Activated naive CD4-positive, alpha-beta T cell treated with anti-CD3 and anti-CD28 coated beads for 36 hours (primary cell): ENCODE measurements at regions of chr12 and their contacts with region 1.

Region 1: DNA sequence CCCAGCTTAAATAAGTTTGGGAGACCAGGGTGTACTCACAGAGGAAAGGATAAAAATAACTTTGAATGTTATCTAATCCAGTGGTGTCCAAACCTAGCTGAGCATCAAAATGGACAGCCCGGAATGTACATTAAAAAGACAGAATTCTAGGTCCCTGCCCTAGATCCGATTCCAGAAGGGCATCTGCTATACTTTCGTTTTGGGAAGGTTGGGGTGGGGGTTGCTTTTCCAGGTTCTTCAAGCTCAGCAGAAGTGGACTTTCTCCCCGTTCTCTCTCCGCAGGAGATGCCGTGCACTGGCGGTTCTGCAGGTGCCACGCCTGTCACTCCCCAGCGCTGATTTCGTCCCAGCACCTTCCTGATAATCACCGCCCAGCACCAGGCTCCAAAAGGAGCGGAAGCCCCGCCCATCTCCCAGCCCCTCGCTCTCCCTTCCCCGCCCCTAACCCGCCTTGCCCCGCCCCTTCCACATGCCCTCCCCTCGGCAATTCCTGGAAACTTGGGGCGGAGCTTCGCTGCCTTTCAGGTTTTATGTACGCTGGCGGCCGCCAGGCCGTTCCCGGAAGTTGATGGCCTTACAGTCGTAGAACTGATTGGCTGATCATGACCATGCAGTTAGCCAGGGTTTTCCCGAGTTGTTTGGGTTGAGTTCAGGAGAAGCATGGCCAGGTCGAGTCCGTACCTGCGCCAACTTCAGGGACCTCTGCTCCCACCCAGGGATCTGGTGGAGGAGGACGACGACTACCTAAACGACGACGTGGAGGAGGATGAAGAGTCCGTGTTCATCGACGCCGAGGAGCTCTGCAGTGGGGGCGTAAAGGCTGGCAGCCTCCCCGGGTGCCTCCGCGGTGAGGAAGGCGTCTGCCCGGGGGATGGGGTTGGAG is at the start of gene HELB:
- DNase-seq: peak; percentile 99
- H3K4me3 Mint-ChIP-seq: peak within 1 kb of the TSS; percentile 100
- H3K27ac Mint-ChIP-seq: peak within 1 kb of the TSS; percentile 100
- H3K4me1 Mint-ChIP-seq: peaks cover 36% of the 10 kb centered on the region
- H3K27me3 Mint-ChIP-seq: no peaks in the 10 kb centered on the region
- total RNA-seq, gene HELB: 23.0 to 23.7 TPM

Region 2: GRCh38 chr12:64610149-64610678 is 1692.0 kb before region 1 on chr12 and contains the start of gene RASSF3:
- CTCF ChIA-PET with region 1: no interaction called
- intact Hi-C with region 1: loop called (anchors 2 kb)
- DNase-seq: peak; percentile 83
- H3K4me3 Mint-ChIP-seq: peak within 1 kb of the TSS; percentile 95
- H3K27ac Mint-ChIP-seq: peak within 1 kb of the TSS; percentile 96
- H3K4me1 Mint-ChIP-seq: peaks cover 43% of the 10 kb centered on the region
- H3K27me3 Mint-ChIP-seq: no peaks in the 10 kb centered on the region
- total RNA-seq, gene RASSF3: 39.4 to 43.8 TPM

Region 3: GRCh38 chr12:66169221-66170170 is 132.7 kb before region 1 on chr12 and contains the start of gene TMBIM4:
- CTCF ChIA-PET with region 1: interaction called, 8 read pairs
- intact Hi-C with region 1: loop called (anchors 1 kb)
- DNase-seq: peak; percentile 93
- H3K4me3 Mint-ChIP-seq: peak within 1 kb of the TSS; percentile 98
- H3K27ac Mint-ChIP-seq: peak within 1 kb of the TSS; percentile 100
- H3K4me1 Mint-ChIP-seq: peaks cover 42% of the 10 kb centered on the region
- H3K27me3 Mint-ChIP-seq: no peaks in the 10 kb centered on the region
- total RNA-seq, gene TMBIM4: 51.2 to 51.3 TPM

Region 4: GRCh38 chr12:66288121-66288520 is 14.1 kb before region 1 on chr12:
- CTCF ChIA-PET with region 1: interaction called, 5 read pairs
- intact Hi-C with region 1: loop called (anchors 1 kb)
- DNase-seq: peak; percentile 67
- H3K4me3 Mint-ChIP-seq: peak overlapping the region; percentile 40
- H3K27ac Mint-ChIP-seq: peak overlapping the region; percentile 74
- H3K4me1 Mint-ChIP-seq: peaks cover 77% of the 10 kb centered on the region
- H3K27me3 Mint-ChIP-seq: no peaks in the 10 kb centered on the region

Region 5: GRCh38 chr12:66428261-66428660 is 126.1 kb after region 1 on chr12:
- CTCF ChIA-PET with region 1: no interaction called
- intact Hi-C with region 1: no loop called
- DNase-seq: no peak
- H3K4me3 Mint-ChIP-seq: no peak overlapping the region
- H3K27ac Mint-ChIP-seq: no peak overlapping the region
- H3K4me1 Mint-ChIP-seq: no peaks in the 10 kb centered on the region
- H3K27me3 Mint-ChIP-seq: peaks cover 3% of the 10 kb centered on the region

Region 6: GRCh38 chr12:66491853-66492252 is 189.7 kb after region 1 on chr12:
- CTCF ChIA-PET with region 1: no interaction called
- intact Hi-C with region 1: no loop called
- DNase-seq: no peak
- H3K4me3 Mint-ChIP-seq: no peak overlapping the region
- H3K27ac Mint-ChIP-seq: no peak overlapping the region
- H3K4me1 Mint-ChIP-seq: no peaks in the 10 kb centered on the region
- H3K27me3 Mint-ChIP-seq: peaks cover 6% of the 10 kb centered on the region

Region 7: GRCh38 chr12:67268896-67269631 is 966.9 kb after region 1 on chr12 and contains the start of gene CAND1:
- CTCF ChIA-PET with region 1: no interaction called
- intact Hi-C with region 1: loop called (anchors 1 kb)
- DNase-seq: peak; percentile 97
- H3K4me3 Mint-ChIP-seq: peak within 1 kb of the TSS; percentile 89
- H3K27ac Mint-ChIP-seq: peak within 1 kb of the TSS; percentile 100
- H3K4me1 Mint-ChIP-seq: peaks cover 33% of the 10 kb centered on the region
- H3K27me3 Mint-ChIP-seq: no peaks in the 10 kb centered on the region
- total RNA-seq, gene CAND1: 221 to 224 TPM